Common myeloid progenitor, CD34-positive (primary cell): ENCODE measurements at regions of chr16 and their contacts with region 1.

Region 1: GRCh38 chr16:15874745-15875314 is 13.6 kb downstream of the CEP20 start:
- DNase-seq: peak; percentile 49 to 63 (median 58)
- H3K4me3 ChIP-seq: peak overlapping the region in 1 of 7 experiments; percentile 59
- H3K27ac ChIP-seq: peak overlapping the region; percentile 12 to 54
- H3K4me1 ChIP-seq: peaks cover 0 to 16% (median 10%) of the 10 kb centered on the region in 4 experiments
- H3K27me3 ChIP-seq: no peaks in the 10 kb centered on the region

Region 2: GRCh38 chr16:15790458-15790857 is 84.4 kb before region 1 on chr16:
- CTCF ChIA-PET with region 1: no interaction called
- POLR2A ChIA-PET with region 1: no interaction called
- DNase-seq: no peak
- H3K4me3 ChIP-seq: no peak overlapping the region
- H3K27ac ChIP-seq: no peak overlapping the region
- H3K4me1 ChIP-seq: no peaks in the 10 kb centered on the region
- H3K27me3 ChIP-seq: no peaks in the 10 kb centered on the region

Region 3: DNA sequence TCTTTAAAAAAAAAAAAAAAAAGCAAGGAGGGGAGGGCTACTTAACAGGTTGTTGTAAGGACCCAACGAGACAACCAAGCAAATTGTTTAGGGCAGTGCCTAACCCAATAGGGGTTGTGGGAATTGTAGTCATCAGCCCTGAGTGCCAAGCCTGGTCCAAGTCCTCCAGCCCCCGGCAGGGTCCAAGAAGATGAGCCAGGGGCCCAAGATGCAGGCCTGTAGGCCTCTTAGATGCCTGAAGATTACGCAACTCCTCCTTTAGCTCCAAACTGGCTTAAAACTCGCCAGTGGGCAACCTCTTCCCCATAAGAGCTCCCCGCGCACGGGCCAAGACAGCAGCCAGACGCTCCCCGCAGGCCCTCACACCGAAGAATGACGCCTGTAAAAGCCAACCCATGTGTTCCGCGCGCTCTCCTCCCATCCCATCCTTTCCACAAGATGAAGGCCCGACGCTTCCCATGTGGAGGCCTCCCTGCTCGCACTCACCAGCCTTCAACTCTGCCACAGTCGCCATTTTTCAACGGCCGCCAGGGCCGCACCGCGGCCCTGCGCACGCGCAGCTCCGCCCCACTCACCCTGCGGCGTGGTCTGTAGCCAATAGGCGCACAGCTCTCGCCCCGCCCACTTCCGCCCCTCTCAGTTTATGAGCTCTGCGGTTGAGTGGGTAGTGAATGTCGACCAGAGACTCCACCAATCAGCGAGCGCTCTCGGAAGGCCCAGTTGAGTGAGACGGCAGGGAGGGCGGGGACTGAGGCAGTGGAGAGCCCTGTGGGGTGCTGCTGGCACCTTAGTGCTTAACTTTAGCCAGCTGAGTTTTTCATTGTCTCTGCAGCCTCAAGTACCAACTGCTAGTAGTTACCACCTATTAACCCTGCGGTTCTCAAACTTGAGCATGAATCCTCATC is 13.5 kb after region 1 on chr16 and contains the start of gene CEP20:
- CTCF ChIA-PET with region 1: interaction called, 28 read pairs
- POLR2A ChIA-PET with region 1: interaction called, 3 read pairs
- DNase-seq: peak; percentile 99 to 100 (median 99)
- H3K4me3 ChIP-seq: peak within 1 kb of the TSS; percentile 87 to 99 (median 96)
- H3K27ac ChIP-seq: peak within 1 kb of the TSS; percentile 98
- H3K4me1 ChIP-seq: peaks cover 8 to 33% (median 22%) of the 10 kb centered on the region in 4 experiments
- H3K27me3 ChIP-seq: no peaks in the 10 kb centered on the region